Activated B cell treated with CpG ODN at 0.5 μM for 24 hours (primary cell): ENCODE measurements at regions of chr11 and their contacts with region 1.

Region 1: GRCh38 chr11:37264783-37265182 is 666.7 kb upstream of the RAG2 start:
- DNase-seq: no peak
- ATAC-seq: no peak
- H3K4me3 Mint-ChIP-seq: no peak overlapping the region
- H3K27ac Mint-ChIP-seq: no peak overlapping the region
- H3K4me1 Mint-ChIP-seq: no peaks in the 10 kb centered on the region
- H3K27me3 Mint-ChIP-seq: no peaks in the 10 kb centered on the region
- CTCF ChIP-seq: no peak

Region 2: DNA sequence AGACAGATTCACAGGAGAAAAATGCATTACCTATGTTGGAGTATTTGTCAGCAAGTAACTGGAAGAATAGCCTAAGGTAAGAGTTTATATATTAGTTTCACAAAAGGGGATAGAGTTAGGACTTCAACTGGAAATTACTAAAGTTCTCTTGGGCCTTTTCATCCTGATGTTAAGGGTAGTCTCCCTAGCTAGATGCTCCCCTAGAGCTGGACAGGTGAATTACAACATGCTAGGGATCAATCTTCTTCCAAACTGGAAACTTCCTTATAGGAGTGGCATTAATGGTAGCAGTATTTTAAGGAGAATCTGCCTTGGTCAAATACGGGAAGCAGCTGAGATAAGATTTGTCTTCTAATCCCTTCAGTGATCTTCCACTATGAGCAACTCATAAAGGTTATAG is 33.9 kb before region 1 on chr11:
- CTCF ChIA-PET with region 1: no interaction called
- POLR2A ChIA-PET with region 1: no interaction called
- intact Hi-C with region 1: loop called (anchors 5 kb)
- DNase-seq: no peak
- ATAC-seq: no peak
- H3K4me3 Mint-ChIP-seq: no peak overlapping the region
- H3K27ac Mint-ChIP-seq: no peak overlapping the region
- H3K4me1 Mint-ChIP-seq: no peaks in the 10 kb centered on the region
- H3K27me3 Mint-ChIP-seq: no peaks in the 10 kb centered on the region
- CTCF ChIP-seq: no peak

Region 3: GRCh38 chr11:37248145-37248544 is 16.6 kb before region 1 on chr11:
- CTCF ChIA-PET with region 1: no interaction called
- POLR2A ChIA-PET with region 1: no interaction called
- intact Hi-C with region 1: no loop called
- DNase-seq: no peak
- ATAC-seq: no peak
- H3K4me3 Mint-ChIP-seq: no peak overlapping the region
- H3K27ac Mint-ChIP-seq: no peak overlapping the region
- H3K4me1 Mint-ChIP-seq: no peaks in the 10 kb centered on the region
- H3K27me3 Mint-ChIP-seq: no peaks in the 10 kb centered on the region
- CTCF ChIP-seq: no peak

Region 4: GRCh38 chr11:37496196-37496595 is 231.4 kb after region 1 on chr11:
- CTCF ChIA-PET with region 1: no interaction called
- POLR2A ChIA-PET with region 1: no interaction called
- intact Hi-C with region 1: no loop called
- DNase-seq: no peak
- ATAC-seq: no peak
- H3K4me3 Mint-ChIP-seq: no peak overlapping the region
- H3K27ac Mint-ChIP-seq: no peak overlapping the region
- H3K4me1 Mint-ChIP-seq: no peaks in the 10 kb centered on the region
- H3K27me3 Mint-ChIP-seq: no peaks in the 10 kb centered on the region
- CTCF ChIP-seq: no peak